ENCODE measurements at regions of chr4 and their contacts with region 1.

Region 1: GRCh38 chr4:169383724-169384123 is 113.0 kb upstream of the SH3RF1 start:
- DNase-seq: no peak
- ATAC-seq: no peak
- H3K4me3 ChIP-seq: no peak overlapping the region
- H3K4me3 Mint-ChIP-seq: no peak overlapping the region
- H3K27ac ChIP-seq: no peak overlapping the region
- H3K27ac Mint-ChIP-seq: no peak overlapping the region
- H3K4me1 ChIP-seq: no peaks in the 10 kb centered on the region
- H3K4me1 Mint-ChIP-seq: no peaks in the 10 kb centered on the region
- H3K27me3 ChIP-seq: no peaks in the 10 kb centered on the region
- H3K27me3 Mint-ChIP-seq: no peaks in the 10 kb centered on the region

Region 2: GRCh38 chr4:168797738-168798375 is 585.9 kb before region 1 on chr4:
- CTCF ChIA-PET with region 1: no interaction called
- POLR2A ChIA-PET with region 1: interaction called in 1 of 2 experiments, 12 read pairs
- DNase-seq: no peak
- ATAC-seq: no peak
- H3K4me3 ChIP-seq: no peak overlapping the region
- H3K4me3 Mint-ChIP-seq: no peak overlapping the region
- H3K27ac ChIP-seq: no peak overlapping the region
- H3K27ac Mint-ChIP-seq: no peak overlapping the region
- H3K4me1 ChIP-seq: no peaks in the 10 kb centered on the region
- H3K4me1 Mint-ChIP-seq: no peaks in the 10 kb centered on the region
- H3K27me3 ChIP-seq: peaks cover 0 to 7% of the 10 kb centered on the region in 2 experiments
- H3K27me3 Mint-ChIP-seq: peaks cover 4 to 8% of the 10 kb centered on the region in 2 donors

Region 3: GRCh38 chr4:169270810-169271691 is 112.7 kb before region 1 on chr4 and contains the start of gene SH3RF1:
- CTCF ChIA-PET with region 1: no interaction called
- POLR2A ChIA-PET with region 1: no interaction called
- DNase-seq: peak in 2 of 35 experiments; percentile 9 to 12
- ATAC-seq: peak; percentile 49 to 56 (median 50)
- H3K4me3 ChIP-seq: peak within 1 kb of the TSS; percentile 33 to 76
- H3K4me3 Mint-ChIP-seq: peak within 1 kb of the TSS; percentile 67 to 76 (median 72)
- H3K27ac ChIP-seq: no peak within 1 kb of the TSS
- H3K27ac Mint-ChIP-seq: no peak within 1 kb of the TSS
- H3K4me1 ChIP-seq: peaks cover 7 to 16% of the 10 kb centered on the region in 2 experiments
- H3K4me1 Mint-ChIP-seq: peaks cover 8 to 13% (median 10%) of the 10 kb centered on the region in 3 donors
- H3K27me3 ChIP-seq: peaks cover 0 to 28% of the 10 kb centered on the region in 2 experiments
- H3K27me3 Mint-ChIP-seq: peaks cover 46 to 55% of the 10 kb centered on the region in 2 donors
- total RNA-seq, gene SH3RF1: 0.23 to 0.60 (median 0.27) TPM in 4 of 5 donors, not detected in the other

Region 4: GRCh38 chr4:169369634-169370033 is 14.1 kb before region 1 on chr4:
- CTCF ChIA-PET with region 1: no interaction called
- POLR2A ChIA-PET with region 1: interaction called in 1 of 2 experiments, 12 read pairs
- DNase-seq: no peak
- ATAC-seq: no peak
- H3K4me3 ChIP-seq: no peak overlapping the region
- H3K4me3 Mint-ChIP-seq: no peak overlapping the region
- H3K27ac ChIP-seq: no peak overlapping the region
- H3K27ac Mint-ChIP-seq: no peak overlapping the region
- H3K4me1 ChIP-seq: no peaks in the 10 kb centered on the region
- H3K4me1 Mint-ChIP-seq: no peaks in the 10 kb centered on the region
- H3K27me3 ChIP-seq: no peaks in the 10 kb centered on the region
- H3K27me3 Mint-ChIP-seq: peaks cover 0 to 3% of the 10 kb centered on the region in 2 donors